ENCODE measurements at regions of chr14 and their contacts with region 1.

Region 1: DNA sequence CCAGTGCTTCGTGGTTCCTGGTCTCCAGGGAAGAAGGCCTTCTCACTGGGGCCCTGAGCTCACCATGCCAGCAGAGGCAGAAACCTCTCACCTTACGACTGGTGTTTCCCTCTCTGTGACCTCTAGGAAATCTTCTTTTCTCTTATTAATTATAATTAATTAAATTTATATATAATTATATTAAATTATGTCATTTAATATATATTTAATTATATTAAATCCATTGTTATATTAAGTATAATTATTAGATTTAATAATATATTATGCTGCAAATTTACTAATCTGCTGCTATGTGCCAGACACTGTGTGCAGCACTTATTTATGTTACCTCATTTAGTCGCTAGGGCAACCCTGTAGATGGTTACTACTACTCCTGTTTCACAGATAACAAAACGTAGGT is 70.3 kb upstream of the MBIP start:
- DNase-seq: no peak
- H3K4me3 ChIP-seq: no peak overlapping the region
- H3K27ac ChIP-seq: no peak overlapping the region
- H3K4me1 ChIP-seq: no peaks in the 10 kb centered on the region
- H3K27me3 ChIP-seq: no peaks in the 10 kb centered on the region
- CTCF ChIP-seq: no peak

Region 2: GRCh38 chr14:36402867-36403266 is 12.1 kb after region 1 on chr14:
- CTCF ChIA-PET with region 1: no interaction called
- dilution Hi-C with region 1: no loop called
- in situ Hi-C with region 1: no loop called
- intact Hi-C with region 1: loop called (anchors 1 kb)
- DNase-seq: no peak
- H3K4me3 ChIP-seq: no peak overlapping the region
- H3K27ac ChIP-seq: no peak overlapping the region
- H3K4me1 ChIP-seq: no peaks in the 10 kb centered on the region
- H3K27me3 ChIP-seq: no peaks in the 10 kb centered on the region
- CTCF ChIP-seq: no peak

Region 3: GRCh38 chr14:36465178-36465577 is 74.5 kb after region 1 on chr14:
- CTCF ChIA-PET with region 1: no interaction called
- dilution Hi-C with region 1: no loop called
- in situ Hi-C with region 1: no loop called
- intact Hi-C with region 1: no loop called
- DNase-seq: no peak
- H3K4me3 ChIP-seq: no peak overlapping the region
- H3K27ac ChIP-seq: no peak overlapping the region
- H3K4me1 ChIP-seq: no peaks in the 10 kb centered on the region
- H3K27me3 ChIP-seq: peaks cover 8% of the 10 kb centered on the region
- CTCF ChIP-seq: no peak